ENCODE measurements at regions of chr10 and their contacts with region 1.

Region 1: GRCh38 chr10:80924063-80924952 is 386.6 kb downstream of the SH2D4B start:
- DNase-seq: no peak
- ATAC-seq: peak; percentile 60

Region 2: DNA sequence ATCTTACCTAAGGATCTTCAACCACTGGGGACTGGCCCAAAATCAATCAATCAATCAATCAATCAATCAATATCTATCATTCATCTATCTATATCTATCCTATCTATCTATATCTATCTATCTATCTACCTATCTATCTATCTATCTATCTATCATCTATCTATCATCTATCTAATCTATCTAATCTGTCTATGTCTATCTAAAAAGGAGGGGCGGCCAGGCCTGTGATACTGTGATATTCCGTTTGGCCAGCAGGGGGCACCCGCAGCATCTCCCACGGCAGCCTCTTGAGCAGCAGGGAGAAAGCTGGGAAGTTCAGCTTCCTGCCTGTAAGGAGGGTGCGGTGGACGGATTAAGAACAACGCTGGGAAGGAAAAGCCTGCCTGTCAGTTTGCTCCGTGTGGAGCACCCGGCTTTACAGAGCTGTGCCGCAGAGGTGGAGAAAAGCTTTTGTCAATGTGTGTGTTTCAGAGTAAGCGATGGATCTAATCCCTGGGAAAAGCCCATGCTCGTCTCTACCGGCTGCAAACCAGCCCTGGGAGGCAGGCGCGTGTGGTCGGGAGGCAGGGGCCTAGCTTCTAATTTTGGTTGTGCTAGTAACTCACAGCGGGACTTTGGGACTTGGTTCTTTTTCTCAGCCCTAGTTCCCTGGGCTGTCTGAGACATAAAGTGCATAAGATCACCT is 261.6 kb before region 1 on chr10:
- intact Hi-C with region 1: loop called (anchors 10 kb)
- DNase-seq: peak; percentile 90
- ATAC-seq: peak; percentile 89

Region 3: GRCh38 chr10:80699602-80700039 is 224.7 kb before region 1 on chr10:
- intact Hi-C with region 1: loop called (anchors 10 kb)
- DNase-seq: peak; percentile 87
- ATAC-seq: peak; percentile 90

Region 4: DNA sequence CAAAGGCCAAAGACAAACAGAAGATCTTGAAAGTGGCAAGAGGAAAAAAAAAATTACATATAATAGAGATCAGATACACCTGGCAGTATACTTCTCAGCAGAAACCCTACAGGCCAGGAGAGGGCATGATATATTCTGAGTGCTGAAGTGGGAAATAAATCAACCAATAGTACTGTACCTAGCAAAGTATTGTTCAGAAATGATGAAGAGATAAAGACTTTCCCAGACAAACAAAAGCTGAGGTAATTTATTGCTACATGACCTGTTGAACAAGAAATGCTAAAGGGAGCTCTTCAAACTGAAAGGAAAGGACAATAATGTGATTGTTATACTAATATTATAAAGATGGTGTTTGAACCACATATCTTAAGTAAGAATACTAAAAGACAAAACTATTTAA is 94.7 kb before region 1 on chr10:
- intact Hi-C with region 1: no loop called
- DNase-seq: no peak
- ATAC-seq: no peak

Measured in Right ventricle myocardium superior (tissue), 1 donor.